HCT116 (cell line): ENCODE measurements at regions of chr14 and their contacts with region 1.

Region 1: DNA sequence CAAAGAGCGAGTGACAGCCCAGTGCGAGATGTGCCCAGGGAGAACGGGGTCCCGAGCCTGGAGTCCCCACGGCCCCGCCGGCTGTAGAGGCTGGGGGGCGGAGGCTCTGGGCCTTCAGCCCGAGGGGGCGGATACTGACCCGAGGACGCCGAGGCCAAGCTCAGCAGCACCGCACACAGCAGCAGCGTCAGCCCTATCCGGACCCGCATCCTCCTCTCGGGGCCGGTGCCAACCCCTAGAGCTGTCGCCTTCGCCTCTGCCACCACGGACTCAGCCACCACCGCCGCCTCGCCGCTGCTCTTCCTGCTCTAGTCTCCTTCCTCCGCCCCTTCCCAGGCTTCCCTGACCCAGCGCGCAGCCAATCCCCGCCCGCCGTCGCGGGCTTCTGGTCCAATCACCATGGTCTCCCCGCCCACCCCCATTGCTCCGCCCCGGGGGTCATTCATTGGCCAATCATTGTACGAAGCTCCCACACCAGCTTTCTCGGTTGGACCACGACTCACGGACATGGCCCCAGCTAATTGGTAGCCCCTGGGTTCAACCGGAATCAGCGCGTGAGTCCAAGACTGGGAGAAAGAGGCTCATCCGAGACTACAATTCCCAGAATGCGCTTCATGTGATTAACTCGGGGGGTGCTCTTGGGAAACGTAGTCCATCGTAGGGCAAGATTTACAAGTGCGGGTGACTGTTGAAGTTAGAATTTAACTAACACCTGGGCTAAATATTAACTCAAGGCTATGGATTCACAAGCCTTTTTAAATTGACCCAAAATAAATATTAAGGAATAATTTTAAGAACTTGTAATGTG is at the start of gene SEL1L:
- DNase-seq: peak; percentile 99
- ATAC-seq: peak; percentile 98
- H3K4me3 ChIP-seq: peak within 1 kb of the TSS; percentile 77 to 86
- H3K27ac ChIP-seq: peak within 1 kb of the TSS; percentile 6; the same call in 1 of the 2 replicates
- H3K4me1 ChIP-seq: peaks cover 6 to 15% of the 10 kb centered on the region in 2 experiments; a peak in 3 of 4 replicates
- H3K27me3 ChIP-seq: no peaks in the 10 kb centered on the region
- CTCF ChIP-seq: no peak
- POLR2A ChIP-seq: peak; percentile 29
- RAD21 ChIP-seq: no peak
- total RNA-seq, gene SEL1L: 41.4 TPM

Region 2: DNA sequence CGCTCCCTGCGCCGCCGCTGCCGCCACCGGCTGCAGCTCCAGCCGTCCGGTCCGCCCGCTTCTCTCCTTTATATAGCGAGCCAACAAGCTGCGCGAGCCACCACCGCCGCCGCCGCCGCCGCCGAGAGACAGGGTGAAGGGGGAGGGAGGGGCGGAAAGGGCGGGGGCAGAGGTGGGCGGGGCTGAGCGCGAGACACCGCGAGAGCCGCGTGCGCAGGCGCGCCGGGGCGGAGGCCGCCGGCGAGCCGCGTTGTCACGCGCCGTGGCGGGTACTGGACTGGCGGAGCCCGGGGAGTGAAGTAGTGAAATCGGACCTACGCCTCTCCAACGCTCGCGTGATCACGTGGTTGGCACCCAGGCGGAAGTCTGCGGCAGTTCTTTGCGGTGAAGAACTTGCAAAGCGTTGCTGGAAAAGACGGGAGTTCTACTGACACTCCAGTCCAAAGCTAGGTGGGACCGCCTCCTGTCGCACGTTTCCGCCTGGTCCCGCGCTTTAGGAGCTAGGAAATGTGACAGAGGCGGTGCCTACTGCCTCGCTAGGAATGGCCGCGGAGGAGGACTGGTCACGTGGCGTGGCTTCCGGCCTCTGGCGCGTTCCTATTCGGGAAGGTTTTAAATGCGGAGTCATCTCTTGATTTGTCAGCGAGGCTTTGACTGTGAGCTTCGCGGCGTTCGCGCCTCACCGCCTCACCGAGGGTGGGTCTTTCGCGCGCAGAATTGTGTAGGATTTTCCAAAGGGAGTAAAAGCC is 312.7 kb before region 1 on chr14 and contains the start of gene GTF2A1:
- CTCF ChIA-PET with region 1: no interaction called
- POLR2A ChIA-PET with region 1: interaction called, 4 read pairs
- RAD21 ChIA-PET with region 1: no interaction called
- intact Hi-C with region 1: loop called (anchors 5 kb)
- DNase-seq: peak; percentile 89
- ATAC-seq: peak; percentile 87
- H3K4me3 ChIP-seq: peak within 1 kb of the TSS; percentile 91 to 92
- H3K27ac ChIP-seq: peak within 1 kb of the TSS; percentile 95
- H3K4me1 ChIP-seq: peaks cover 7 to 20% of the 10 kb centered on the region in 2 experiments
- H3K27me3 ChIP-seq: no peaks in the 10 kb centered on the region
- CTCF ChIP-seq: no peak
- POLR2A ChIP-seq: peak; percentile 86
- RAD21 ChIP-seq: no peak
- total RNA-seq, gene GTF2A1: 39.7 TPM

Region 3: GRCh38 chr14:81523616-81524015 is 10.1 kb before region 1 on chr14:
- CTCF ChIA-PET with region 1: no interaction called
- POLR2A ChIA-PET with region 1: interaction called, 10 read pairs
- RAD21 ChIA-PET with region 1: no interaction called
- intact Hi-C with region 1: no loop called
- DNase-seq: no peak
- ATAC-seq: no peak
- H3K4me3 ChIP-seq: no peak overlapping the region
- H3K27ac ChIP-seq: no peak overlapping the region
- H3K4me1 ChIP-seq: no peaks in the 10 kb centered on the region
- H3K27me3 ChIP-seq: no peaks in the 10 kb centered on the region
- CTCF ChIP-seq: no peak
- POLR2A ChIP-seq: no peak
- RAD21 ChIP-seq: no peak

Region 4: DNA sequence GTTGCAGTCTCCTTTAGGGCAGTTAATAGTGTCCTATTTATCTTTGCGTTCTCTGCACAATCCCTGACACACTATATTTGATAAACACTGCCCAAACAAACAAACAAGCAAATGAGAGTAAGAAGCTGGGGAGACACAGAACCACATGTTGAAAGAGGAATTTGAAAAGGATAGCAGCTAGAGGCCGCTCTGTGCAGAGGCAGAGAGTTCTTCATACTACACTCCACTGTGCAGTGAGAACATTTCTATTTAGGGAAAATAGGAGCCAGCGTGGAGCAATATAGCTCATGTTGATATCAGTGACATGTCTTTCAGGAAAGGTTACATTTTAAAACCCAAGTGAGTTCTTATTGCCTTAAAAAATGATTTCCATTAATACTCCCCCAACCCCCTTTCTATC is 140.2 kb after region 1 on chr14:
- CTCF ChIA-PET with region 1: no interaction called
- POLR2A ChIA-PET with region 1: no interaction called
- RAD21 ChIA-PET with region 1: no interaction called
- intact Hi-C with region 1: no loop called
- DNase-seq: no peak
- ATAC-seq: no peak
- H3K4me3 ChIP-seq: no peak overlapping the region
- H3K27ac ChIP-seq: no peak overlapping the region
- H3K4me1 ChIP-seq: no peaks in the 10 kb centered on the region
- H3K27me3 ChIP-seq: no peaks in the 10 kb centered on the region
- CTCF ChIP-seq: no peak
- POLR2A ChIP-seq: no peak
- RAD21 ChIP-seq: no peak